Naive thymus-derived CD8-positive, alpha-beta T cell (primary cell): ENCODE measurements at regions of chr17 and their contacts with region 1.

Region 1: GRCh38 chr17:75034236-75034908 is 12.4 kb downstream of the ATP5PD start:
- DNase-seq: peak; percentile 52 to 89 (median 78)
- ATAC-seq: peak; percentile 24
- H3K4me3 Mint-ChIP-seq: peak overlapping the region; percentile 85 to 96 (median 89)
- H3K27ac Mint-ChIP-seq: peak overlapping the region; percentile 98 to 100 (median 100)
- H3K4me1 Mint-ChIP-seq: peaks cover 38 to 66% (median 56%) of the 10 kb centered on the region in 4 donors
- H3K27me3 Mint-ChIP-seq: peaks cover 0 to 11% (median 0%) of the 10 kb centered on the region in 5 donors

Region 2: GRCh38 chr17:74972107-74972972 is 62.0 kb before region 1 on chr17 and contains the start of gene HID1:
- POLR2A ChIA-PET with region 1: interaction called, 13 read pairs
- DNase-seq: peak; percentile 60 to 92 (median 78)
- ATAC-seq: peak; percentile 86 to 90
- H3K4me3 Mint-ChIP-seq: peak within 1 kb of the TSS; percentile 77 to 95 (median 88)
- H3K27ac Mint-ChIP-seq: peak within 1 kb of the TSS; percentile 52 to 94 (median 81)
- H3K4me1 Mint-ChIP-seq: peaks cover 4 to 17% (median 14%) of the 10 kb centered on the region in 4 donors
- H3K27me3 Mint-ChIP-seq: peaks cover 0 to 15% (median 0%) of the 10 kb centered on the region in 5 donors
- polyA plus RNA-seq, gene HID1: 4.2 to 6.9 (median 4.7) TPM

Region 3: DNA sequence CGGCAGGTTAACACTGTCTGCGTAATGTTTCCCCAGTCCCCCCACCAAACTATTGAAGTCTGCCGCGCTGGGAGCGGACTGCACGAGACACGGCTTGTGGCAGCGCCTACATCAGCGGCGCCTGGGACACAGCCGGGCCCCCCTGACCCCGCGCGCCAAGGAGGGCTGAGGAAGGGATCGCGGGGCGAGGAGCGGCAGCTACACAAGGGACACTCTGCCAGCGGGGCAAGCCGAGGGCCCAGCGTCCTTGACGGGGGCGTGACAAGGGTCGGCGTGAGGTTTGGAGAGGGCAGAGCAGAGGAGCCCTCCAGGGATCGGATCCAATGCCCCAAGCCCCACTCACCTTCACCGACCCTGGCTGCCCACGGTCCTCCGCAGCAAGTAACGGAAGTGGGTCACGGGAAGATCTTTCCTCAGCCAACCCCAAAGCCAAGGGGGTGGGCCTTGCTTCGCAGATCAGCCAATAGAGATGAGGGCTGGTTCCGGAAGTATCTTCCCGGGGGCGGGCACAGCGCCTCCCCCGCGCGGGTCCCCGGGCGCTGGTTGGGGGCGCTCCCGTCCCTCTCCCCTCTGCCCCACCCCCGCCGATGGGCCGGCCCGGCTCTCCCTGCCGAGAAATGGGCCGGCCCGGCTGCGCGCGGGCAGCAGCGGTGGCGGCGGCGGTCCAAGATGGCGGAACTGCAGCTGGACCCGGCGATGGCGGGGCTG is 12.4 kb after region 1 on chr17 and contains the starts of genes ATP5PD and KCTD2:
- POLR2A ChIA-PET with region 1: interaction called, 68 read pairs
- DNase-seq: peak; percentile 86 to 97 (median 91)
- ATAC-seq: peak; percentile 92 to 93
- H3K4me3 Mint-ChIP-seq: peak within 1 kb of the TSS; percentile 95 to 100 (median 96)
- H3K27ac Mint-ChIP-seq: peak within 1 kb of the TSS; percentile 91 to 98 (median 98)
- H3K4me1 Mint-ChIP-seq: peaks cover 14 to 54% (median 47%) of the 10 kb centered on the region in 4 donors
- H3K27me3 Mint-ChIP-seq: no peaks in the 10 kb centered on the region
- polyA plus RNA-seq, gene ATP5PD: 406 to 455 (median 449) TPM
- polyA plus RNA-seq, gene KCTD2: 6.8 to 10.9 (median 7.8) TPM